ENCODE measurements at regions of chr7 and their contacts with region 1.

Region 1: GRCh38 chr7:158976849-158977593 is 120.7 kb downstream of the DYNC2I1 start:
- DNase-seq: peak; percentile 56 to 81 (median 73)
- H3K4me3 ChIP-seq: peak overlapping the region; percentile 29
- H3K27ac ChIP-seq: no peak overlapping the region
- H3K4me1 ChIP-seq: peaks cover 2% of the 10 kb centered on the region
- H3K27me3 ChIP-seq: no peaks in the 10 kb centered on the region
- CTCF ChIP-seq: peak in 2 of 3 donors; percentile 49 to 61
- EP300 ChIP-seq: no peak
- POLR2A ChIP-seq: no peak

Region 2: GRCh38 chr7:158672975-158673374 is 304.0 kb before region 1 on chr7:
- intact Hi-C with region 1: no loop called
- DNase-seq: no peak
- H3K4me3 ChIP-seq: no peak overlapping the region
- H3K27ac ChIP-seq: no peak overlapping the region
- H3K4me1 ChIP-seq: no peaks in the 10 kb centered on the region
- H3K27me3 ChIP-seq: no peaks in the 10 kb centered on the region
- CTCF ChIP-seq: no peak
- EP300 ChIP-seq: no peak
- POLR2A ChIP-seq: no peak

Region 3: DNA sequence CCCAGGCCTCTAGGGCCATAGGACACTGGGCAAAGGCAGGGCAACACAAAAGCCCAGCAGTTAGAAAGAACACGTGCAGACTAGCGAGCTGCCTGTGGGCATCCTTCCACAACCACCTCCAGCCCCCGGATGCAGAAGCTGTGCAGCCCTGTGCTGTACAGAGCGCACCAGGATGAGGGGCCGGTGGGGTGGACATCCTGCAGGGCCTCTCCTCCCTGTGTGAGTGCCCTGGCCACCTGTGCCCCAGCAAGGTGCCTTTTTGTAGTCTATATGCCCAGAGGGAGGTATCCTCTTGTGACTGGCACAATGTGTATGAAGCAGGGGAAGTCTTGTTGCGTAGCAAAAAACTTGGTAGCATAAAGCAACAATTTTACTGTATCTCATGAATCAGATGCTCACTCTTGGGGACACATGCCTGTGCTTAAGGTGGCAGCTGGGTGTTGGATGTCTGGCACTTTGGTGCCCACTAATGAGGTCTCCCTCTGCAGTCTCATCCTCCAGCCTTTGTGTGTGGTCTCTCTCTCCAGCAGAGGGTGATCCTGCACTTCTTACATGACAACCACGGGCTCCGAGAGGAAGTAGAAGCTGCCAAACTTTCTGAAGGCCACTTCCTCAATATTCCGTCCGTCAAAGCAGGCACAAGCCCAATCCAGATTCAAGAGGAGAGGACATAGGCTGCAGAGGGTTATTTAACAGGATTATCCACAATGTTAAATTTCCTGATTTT is 281.1 kb before region 1 on chr7:
- intact Hi-C with region 1: loop called in 2 of 4 experiments (anchors 5 kb)
- DNase-seq: peak; percentile 51 to 73 (median 62)
- H3K4me3 ChIP-seq: no peak overlapping the region
- H3K27ac ChIP-seq: no peak overlapping the region
- H3K4me1 ChIP-seq: no peaks in the 10 kb centered on the region
- H3K27me3 ChIP-seq: no peaks in the 10 kb centered on the region
- CTCF ChIP-seq: peak in 2 of 3 donors; percentile 48 to 50
- EP300 ChIP-seq: no peak
- POLR2A ChIP-seq: no peak